ENCODE measurements at regions of chr10 and their contacts with region 1.

Region 1: GRCh38 chr10:92087750-92088395 is 164.3 kb downstream of the BTAF1 start:
- DNase-seq: peak; percentile 71
- CTCF ChIP-seq: peak; percentile 70

Region 2: DNA sequence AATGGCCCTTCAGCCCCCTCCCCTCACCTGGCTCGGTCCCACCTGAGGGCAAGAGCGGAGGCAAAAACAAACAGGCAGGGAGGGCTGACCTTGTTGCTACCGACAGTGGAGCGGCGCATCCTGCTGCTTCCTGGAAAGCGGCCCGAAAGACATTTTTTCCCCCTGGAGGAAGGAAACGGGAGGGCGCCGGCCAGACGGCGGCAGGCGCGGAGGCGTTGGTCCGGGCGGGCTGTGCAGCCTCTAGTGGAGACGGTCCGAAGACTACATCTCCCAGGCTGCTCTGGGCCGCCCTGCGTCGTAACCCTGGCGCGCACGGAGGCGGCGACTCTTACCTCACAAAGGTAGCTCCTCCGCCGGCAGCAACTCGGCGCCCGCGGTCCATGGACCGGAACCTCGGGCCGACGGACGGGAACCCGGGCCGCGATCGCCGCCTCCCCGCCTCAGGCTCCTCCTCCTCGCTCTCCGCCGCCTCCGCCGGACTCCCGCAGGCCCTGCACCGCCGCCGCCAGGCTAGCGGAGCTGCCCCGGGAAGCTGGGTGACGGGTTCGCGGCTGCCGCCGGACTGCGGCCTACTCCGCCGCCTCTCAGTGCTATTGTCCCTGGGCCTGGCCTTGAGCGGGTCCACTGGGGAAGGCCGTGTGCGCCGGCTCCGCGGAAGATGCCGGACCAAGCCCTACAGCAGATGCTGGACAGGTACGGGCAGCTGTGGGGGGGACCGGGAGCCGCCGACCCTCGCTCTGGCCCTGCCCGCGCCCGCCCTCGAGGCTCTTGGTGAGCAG is 203.2 kb after region 1 on chr10 and contains the starts of genes CPEB3 and MARCHF5:
- in situ Hi-C with region 1: loop called (anchors 25 kb)
- DNase-seq: peak; percentile 96
- CTCF ChIP-seq: peak; percentile 31